Stomach (tissue), 19 donors: ENCODE measurements at regions of chr17 and their contacts with region 1.

Region 1: DNA sequence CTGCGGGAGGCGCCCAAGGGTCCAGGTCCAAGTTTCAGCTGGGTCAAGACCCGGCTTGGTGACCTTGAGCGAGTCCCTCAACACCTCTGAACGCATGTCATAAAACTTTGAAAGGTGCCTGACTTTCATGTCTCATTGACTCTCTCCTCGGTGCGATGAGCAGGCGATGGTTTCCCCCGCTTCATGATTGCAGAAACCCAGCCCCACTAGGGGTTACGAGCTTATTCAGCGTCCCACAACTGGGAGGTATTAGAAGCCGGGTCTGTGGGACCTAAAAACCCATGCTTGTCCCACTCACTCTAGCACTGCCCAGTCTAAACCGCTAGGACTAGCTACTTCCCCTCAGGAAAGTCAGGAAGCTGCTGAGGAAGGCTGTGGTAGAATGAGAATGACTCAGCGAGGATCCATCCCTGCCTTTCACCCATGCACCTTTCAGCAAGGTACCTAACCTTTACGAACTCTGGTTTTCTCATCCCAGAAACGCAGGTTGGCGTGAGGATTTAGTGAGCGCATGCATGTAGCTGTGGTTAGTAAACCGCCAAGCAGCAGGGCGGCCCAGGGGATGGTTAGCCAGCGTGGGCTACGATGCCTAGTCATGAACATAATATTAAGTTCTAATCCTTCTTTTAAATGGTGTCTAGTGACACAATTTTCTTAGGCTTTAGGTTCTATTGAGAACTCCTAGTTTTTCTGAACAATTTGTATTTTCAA is 26.2 kb upstream of the RFFL start:
- DNase-seq: no peak
- H3K4me3 ChIP-seq: peak overlapping the region; percentile 79 to 92 (median 89)
- H3K27ac ChIP-seq: peak overlapping the region; percentile 75 to 99 (median 93)
- H3K4me1 ChIP-seq: peaks cover 14 to 41% (median 40%) of the 10 kb centered on the region in 4 donors
- H3K27me3 ChIP-seq: no peaks in the 10 kb centered on the region
- CTCF ChIP-seq: peak in 2 of 7 experiments; percentile 32 to 40
- EP300 ChIP-seq: no peak
- POLR2A ChIP-seq: no peak

Region 2: GRCh38 chr17:35002876-35003518 is 86.7 kb before region 1 on chr17:
- intact Hi-C with region 1: loop called (anchors 10 kb)
- DNase-seq: peak; percentile 66 to 77
- H3K4me3 ChIP-seq: no peak overlapping the region
- H3K27ac ChIP-seq: peak overlapping the region in 4 of 5 donors; percentile 45 to 65 (median 51)
- H3K4me1 ChIP-seq: peaks cover 4 to 39% (median 31%) of the 10 kb centered on the region in 4 donors
- H3K27me3 ChIP-seq: no peaks in the 10 kb centered on the region
- CTCF ChIP-seq: no peak
- EP300 ChIP-seq: no peak
- POLR2A ChIP-seq: no peak